ENCODE measurements at regions of chr1 and their contacts with region 1.

Region 1: DNA sequence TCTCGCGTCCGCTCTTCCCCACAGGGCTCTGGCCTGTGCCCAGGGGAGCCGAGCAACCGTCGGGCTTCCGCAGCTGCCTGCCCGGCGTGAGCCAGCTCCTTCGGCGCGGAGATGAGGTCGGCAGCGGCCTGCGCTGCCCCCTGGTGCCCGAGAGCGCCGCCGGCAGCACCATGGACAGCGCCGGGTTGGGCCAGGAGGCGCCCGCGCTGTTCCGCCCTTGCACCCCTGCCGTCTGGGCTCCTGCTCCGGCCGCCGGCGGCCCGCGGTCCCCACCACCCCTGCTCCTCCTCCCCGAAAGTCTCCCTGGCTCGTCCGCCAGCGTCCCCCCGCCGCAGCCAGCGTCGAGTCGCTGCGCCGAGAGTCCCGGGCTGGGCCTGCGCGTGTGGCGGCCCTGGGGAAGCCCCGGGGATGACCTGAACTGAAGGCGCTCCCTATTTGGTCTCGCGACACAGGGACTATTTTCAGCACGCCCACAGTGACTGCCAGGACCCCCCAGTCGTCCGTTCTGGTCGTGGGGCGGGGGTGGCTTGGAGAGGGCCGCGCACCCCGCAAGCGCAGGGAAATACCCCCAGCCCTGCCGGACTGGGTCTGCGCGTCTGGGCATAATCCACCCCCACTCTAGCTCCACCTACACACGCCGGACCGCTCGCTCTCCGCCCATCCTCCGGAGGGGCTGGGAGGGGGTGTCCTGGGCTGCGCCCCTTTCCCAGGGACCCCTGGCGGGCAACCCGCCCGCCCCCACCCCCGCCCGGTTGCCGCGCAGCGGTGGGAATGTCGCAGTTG is 1.3 kb downstream of the HES3 start:
- DNase-seq: peak; percentile 90
- CTCF ChIP-seq: peak; percentile 83

Region 2: DNA sequence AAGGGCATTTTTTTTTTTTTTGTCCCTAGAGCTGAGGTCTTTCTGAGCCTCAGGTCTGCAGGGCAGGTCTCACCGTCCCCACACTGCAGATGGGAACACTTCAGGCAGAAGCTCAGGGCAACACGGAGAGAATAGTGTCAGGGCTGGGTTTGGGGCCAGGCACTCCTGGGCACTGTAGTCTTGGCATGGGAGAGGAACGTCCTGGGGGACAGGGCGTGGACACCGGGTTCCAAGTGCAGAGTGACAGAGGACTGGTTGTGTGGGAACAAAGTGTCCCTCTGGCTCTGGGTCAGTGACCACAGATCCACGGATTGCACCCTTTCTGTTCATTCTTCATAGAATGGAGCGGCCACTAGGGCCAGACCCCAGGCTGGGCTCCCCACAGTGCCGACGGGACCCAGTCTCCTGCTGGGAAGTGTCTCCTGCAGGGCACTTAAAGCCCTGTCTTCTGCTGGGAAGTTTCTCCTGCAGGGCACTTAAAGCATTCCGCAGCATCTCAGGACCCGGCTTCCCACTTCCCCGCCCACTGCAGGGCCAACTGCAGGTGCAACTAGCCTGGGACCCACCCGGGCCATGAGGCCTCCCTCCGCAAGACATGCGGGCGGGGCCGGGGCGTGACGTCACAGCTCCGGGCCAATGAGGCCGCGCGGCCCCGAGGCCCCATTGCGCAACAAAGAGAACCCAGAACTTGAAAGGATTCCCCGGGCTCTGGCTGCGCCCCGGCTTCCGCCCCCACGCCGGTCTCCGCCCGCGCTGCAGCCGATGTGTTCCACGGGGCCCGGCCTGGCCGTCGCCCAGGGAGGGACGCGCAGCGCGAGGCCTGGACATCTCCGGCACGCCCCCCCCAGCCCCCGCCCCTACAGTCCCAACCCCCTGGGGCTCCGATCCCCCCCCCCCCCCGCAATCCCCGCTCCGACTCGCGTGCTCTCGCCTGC is 14.5 kb after region 1 on chr1:
- CTCF ChIA-PET with region 1: interaction called, 64 read pairs
- POLR2A ChIA-PET with region 1: interaction called, 3 read pairs
- DNase-seq: peak; percentile 90
- CTCF ChIP-seq: no peak

Region 3: DNA sequence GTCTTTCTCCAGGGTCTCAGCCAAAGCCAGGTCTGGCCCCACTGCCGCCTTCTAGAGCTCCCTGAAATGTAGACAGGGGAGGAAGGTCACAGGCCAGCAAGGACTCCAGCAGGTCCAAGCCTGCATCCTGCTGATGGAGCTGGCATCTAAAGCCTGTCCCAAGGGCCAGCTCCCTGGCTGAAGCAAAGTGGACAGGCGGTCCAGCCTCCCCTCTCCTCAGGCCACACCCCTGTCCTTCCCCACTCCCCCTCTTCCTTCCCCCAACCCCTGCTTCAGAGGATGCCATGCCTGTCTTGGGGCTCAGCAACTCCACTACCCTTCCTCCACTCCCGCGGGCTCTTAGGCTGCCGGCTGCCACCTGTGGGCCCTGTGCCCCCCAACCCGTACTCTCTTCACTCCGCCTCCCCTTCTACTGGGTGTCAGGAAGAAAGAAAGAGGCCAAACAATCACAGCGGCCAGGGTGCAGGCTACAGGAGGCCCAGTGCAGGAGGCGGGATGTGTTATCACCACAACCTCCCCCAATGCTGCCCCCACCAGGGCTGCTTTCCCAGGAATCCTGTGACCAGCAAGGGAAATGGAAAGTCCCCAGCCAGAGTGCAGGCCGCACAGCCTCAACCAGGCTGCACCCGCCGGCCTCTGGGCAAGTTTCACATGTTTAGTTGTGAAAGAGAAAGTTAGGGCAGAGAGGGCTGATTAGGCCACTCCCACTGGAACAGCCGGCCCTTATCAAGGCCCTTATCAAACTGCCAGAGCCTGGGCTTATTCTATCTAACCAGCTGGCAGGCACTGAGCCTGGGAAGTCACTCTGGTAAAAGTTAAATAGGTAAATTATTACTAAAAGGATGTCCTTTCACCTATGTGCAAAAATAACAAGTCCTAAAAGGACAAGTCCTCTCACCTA is 114.2 kb after region 1 on chr1:
- CTCF ChIA-PET with region 1: interaction called, 12 read pairs
- POLR2A ChIA-PET with region 1: no interaction called
- DNase-seq: peak; percentile 82
- CTCF ChIP-seq: no peak

Region 4: GRCh38 chr1:6401673-6402072 is 156.4 kb after region 1 on chr1:
- CTCF ChIA-PET with region 1: interaction called, 30 read pairs
- POLR2A ChIA-PET with region 1: no interaction called
- DNase-seq: no peak
- CTCF ChIP-seq: no peak

Region 5: DNA sequence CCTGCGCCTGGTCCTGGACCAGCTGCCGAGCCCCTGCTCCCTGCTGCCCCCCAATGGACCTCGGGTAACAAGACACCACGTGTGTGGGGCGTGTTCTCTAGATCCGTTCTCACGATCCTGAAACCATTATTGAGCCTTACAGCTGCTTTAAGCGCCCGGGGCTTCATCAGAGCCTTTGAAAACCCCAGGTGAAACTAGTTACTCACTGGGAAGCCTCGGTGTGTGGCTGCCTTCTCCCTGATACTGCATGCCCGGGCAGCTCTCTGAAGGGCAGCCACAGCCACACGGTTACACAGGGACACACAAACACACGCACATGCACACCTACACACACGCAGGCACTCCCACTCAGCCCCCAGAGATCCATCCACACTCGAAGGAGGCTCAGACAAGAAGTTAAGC is 169.2 kb after region 1 on chr1:
- CTCF ChIA-PET with region 1: interaction called, 11 read pairs
- POLR2A ChIA-PET with region 1: no interaction called
- DNase-seq: peak; percentile 76
- CTCF ChIP-seq: peak; percentile 60

Measured in GM10248 (cell line).